ENCODE measurements at regions of chr5 and their contacts with region 1.

Region 1: DNA sequence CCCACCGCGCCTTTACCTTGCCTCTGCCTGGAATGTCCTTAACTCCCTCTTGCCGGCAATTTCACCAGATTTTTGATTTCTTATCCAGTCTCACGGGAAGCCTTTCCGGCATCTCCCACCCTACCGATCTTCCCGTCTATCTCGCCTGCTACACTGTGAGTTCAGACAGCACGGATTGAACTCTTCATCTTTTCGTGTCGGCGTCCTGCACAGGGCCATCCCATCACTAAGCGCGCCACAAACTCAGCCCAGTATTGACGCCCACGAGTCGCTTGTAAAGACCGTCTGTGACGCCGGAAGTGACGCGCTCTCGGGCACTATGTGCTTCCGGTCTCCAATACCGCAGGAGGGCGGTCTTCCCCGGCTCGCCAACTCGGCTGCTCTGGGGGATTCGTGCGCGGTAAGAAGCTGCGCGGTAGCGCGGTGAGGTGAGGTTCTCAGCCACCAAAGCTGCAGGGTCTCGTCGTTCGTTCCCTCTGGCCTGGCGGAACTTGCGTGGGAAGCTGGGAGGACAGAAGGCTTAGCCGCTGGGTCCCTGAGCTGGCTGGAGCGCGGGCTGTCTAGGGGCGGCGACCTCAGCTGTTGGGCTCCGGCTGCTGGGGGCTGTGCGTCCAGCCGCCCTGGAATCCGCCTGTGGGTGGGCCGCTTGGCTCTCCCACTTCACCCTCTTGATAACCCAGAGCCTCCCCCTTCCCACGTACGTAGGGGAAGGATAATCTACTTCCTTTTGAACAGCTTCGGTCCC is at the start of gene ZCCHC9:
- DNase-seq: peak; percentile 89
- H3K4me3 Mint-ChIP-seq: peak within 1 kb of the TSS; percentile 97
- H3K27ac Mint-ChIP-seq: peak within 1 kb of the TSS; percentile 98
- H3K4me1 Mint-ChIP-seq: peaks cover 32% of the 10 kb centered on the region
- H3K27me3 Mint-ChIP-seq: no peaks in the 10 kb centered on the region
- total RNA-seq, gene ZCCHC9: 41.7 and 47.3 TPM in 2 replicates

Region 2: GRCh38 chr5:80481019-80481893 is 820.2 kb before region 1 on chr5:
- intact Hi-C with region 1: loop called (anchors 5 kb)
- DNase-seq: peak; percentile 11
- H3K4me3 Mint-ChIP-seq: no peak overlapping the region
- H3K27ac Mint-ChIP-seq: no peak overlapping the region
- H3K4me1 Mint-ChIP-seq: peaks cover 6% of the 10 kb centered on the region
- H3K27me3 Mint-ChIP-seq: peaks cover 2% of the 10 kb centered on the region

Region 3: DNA sequence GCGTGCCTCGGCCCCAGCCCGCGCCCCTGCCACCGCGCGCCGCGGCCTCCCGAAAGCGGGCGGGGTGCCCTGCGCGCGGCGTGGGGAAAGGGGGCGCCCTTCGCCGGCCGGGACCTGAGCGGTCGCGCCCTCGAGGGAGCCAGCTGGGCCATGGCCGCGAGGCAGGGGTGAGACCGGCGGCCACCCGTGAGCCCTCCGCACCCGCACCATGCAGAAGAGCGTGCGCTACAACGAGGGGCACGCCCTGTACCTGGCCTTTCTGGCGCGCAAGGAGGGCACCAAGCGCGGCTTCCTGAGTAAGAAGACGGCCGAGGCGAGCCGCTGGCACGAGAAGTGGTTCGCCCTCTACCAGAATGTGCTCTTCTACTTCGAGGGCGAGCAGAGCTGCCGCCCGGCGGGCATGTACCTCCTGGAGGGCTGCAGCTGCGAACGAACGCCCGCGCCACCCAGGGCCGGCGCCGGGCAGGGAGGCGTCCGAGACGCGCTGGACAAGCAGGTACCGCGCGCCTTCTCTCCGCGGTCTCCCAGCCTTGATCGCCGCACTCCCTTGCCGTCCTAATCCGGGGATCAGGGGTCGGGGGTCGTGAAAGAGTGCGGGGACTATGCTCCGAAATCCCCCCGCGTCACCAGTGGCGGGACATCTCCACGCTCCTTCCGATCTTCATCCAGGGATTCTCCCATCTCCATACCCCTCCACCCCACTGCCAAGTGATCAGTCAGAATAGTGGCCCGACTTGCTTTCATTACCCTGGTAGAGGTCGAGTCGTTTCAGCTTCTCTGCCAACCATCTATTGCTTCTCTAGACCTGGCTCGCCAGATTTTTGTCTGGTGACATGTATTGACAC is 340.7 kb before region 1 on chr5:
- intact Hi-C with region 1: loop called (anchors 5 kb)
- DNase-seq: peak; percentile 20
- H3K4me3 Mint-ChIP-seq: peak overlapping the region; percentile 90
- H3K27ac Mint-ChIP-seq: peak overlapping the region; percentile 86
- H3K4me1 Mint-ChIP-seq: peaks cover 60% of the 10 kb centered on the region
- H3K27me3 Mint-ChIP-seq: no peaks in the 10 kb centered on the region

Region 4: GRCh38 chr5:81288021-81288433 is 13.4 kb before region 1 on chr5:
- intact Hi-C with region 1: loop called (anchors 1 kb)
- DNase-seq: no peak
- H3K4me3 Mint-ChIP-seq: no peak overlapping the region
- H3K27ac Mint-ChIP-seq: no peak overlapping the region
- H3K4me1 Mint-ChIP-seq: peaks cover 36% of the 10 kb centered on the region
- H3K27me3 Mint-ChIP-seq: no peaks in the 10 kb centered on the region

Region 5: DNA sequence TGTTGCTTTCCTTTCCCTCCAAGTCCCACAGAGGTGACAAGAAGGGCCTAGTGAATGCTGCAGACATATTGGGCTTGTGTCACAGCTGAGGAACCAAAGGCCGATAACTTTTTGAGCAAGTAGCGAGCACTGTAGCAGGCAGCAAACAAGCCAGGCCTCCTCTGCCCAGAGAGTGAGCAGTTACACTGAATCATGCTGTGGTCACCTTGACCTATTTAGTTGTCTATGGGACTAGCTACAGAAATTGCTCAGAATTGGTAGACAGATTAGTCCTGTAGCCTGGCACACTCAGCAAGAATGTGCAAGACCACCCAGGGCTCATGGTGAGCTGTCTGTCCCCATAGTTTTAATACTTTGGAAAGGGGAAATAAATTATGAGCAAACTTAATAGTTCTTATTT is 25.1 kb after region 1 on chr5:
- intact Hi-C with region 1: no loop called
- DNase-seq: no peak
- H3K4me3 Mint-ChIP-seq: no peak overlapping the region
- H3K27ac Mint-ChIP-seq: no peak overlapping the region
- H3K4me1 Mint-ChIP-seq: no peaks in the 10 kb centered on the region
- H3K27me3 Mint-ChIP-seq: peaks cover 6% of the 10 kb centered on the region

Region 6: GRCh38 chr5:81971712-81972495 is 670.5 kb after region 1 on chr5 and contains the start of gene ATG10:
- intact Hi-C with region 1: loop called (anchors 1 kb)
- DNase-seq: peak; percentile 86
- H3K4me3 Mint-ChIP-seq: peak within 1 kb of the TSS; percentile 92
- H3K27ac Mint-ChIP-seq: peak within 1 kb of the TSS; percentile 99
- H3K4me1 Mint-ChIP-seq: peaks cover 33% of the 10 kb centered on the region
- H3K27me3 Mint-ChIP-seq: no peaks in the 10 kb centered on the region
- total RNA-seq, gene ATG10: 6.1 and 7.1 TPM in 2 replicates

Region 7: GRCh38 chr5:82100303-82101077 is 799.0 kb after region 1 on chr5:
- intact Hi-C with region 1: no loop called
- DNase-seq: no peak
- H3K4me3 Mint-ChIP-seq: no peak overlapping the region
- H3K27ac Mint-ChIP-seq: no peak overlapping the region
- H3K4me1 Mint-ChIP-seq: peaks cover 12% of the 10 kb centered on the region
- H3K27me3 Mint-ChIP-seq: no peaks in the 10 kb centered on the region

Region 8: GRCh38 chr5:83076742-83077661 is 1775.6 kb after region 1 on chr5 and contains the starts of genes TMEM167A and XRCC4:
- intact Hi-C with region 1: loop called (anchors 1 kb)
- DNase-seq: peak; percentile 93
- H3K4me3 Mint-ChIP-seq: peak within 1 kb of the TSS; percentile 100
- H3K27ac Mint-ChIP-seq: peak within 1 kb of the TSS; percentile 99
- H3K4me1 Mint-ChIP-seq: peaks cover 43% of the 10 kb centered on the region
- H3K27me3 Mint-ChIP-seq: no peaks in the 10 kb centered on the region
- total RNA-seq, gene TMEM167A: 84.6 and 96.2 TPM in 2 replicates
- total RNA-seq, gene XRCC4: 10.2 and 11.2 TPM in 2 replicates